CD14-positive monocyte (primary cell): ENCODE measurements at regions of chr3 and their contacts with region 1.

Region 1: DNA sequence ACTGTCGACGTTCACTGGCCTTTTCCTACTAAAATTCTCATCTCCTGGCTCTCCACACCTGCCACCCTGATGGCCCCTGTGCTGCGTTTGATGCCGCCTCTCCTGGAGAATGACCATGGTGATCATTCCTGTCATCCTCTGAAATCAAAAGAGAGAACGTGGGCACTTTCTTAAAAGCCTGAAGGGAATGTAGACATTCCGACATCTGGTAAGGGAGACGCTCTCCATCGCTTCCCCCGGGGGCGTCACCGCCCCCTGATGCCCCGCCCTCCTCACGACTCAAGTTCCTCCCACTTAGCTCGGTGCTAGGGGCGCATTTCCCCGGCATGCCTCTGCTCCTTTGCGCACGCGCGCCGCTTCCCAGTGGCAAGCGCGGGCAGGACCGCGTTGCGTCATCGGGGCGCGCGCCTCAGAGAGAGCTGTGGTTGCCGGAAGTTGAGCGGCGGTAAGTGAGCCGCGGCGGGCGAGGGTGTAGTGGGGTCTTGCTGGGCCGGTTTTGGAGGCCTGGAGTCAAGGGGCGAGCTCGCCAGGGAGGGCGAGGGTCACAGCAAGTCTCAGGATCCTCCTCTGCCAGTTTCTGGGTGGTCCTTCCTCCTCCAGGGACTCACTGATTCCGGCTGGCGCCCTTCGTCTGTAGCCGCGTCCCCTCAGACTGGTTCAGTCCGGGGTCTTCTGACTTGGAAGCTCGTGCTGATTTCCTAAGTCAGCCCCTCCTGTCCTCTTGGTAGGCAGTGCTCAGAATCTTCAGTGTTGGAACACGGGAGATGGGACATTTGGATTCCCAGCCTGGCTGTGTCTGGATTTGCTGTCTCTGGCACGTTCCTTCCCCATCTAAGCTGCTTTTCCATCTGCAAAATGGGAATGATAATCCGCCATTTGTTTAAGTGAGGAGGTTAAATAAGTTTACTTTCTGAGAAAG is at the start of gene ATG7:
- DNase-seq: peak; percentile 97 to 98 (median 97)
- H3K4me3 ChIP-seq: peak within 1 kb of the TSS; percentile 84 to 94 (median 84)
- H3K4me3 Mint-ChIP-seq: peak within 1 kb of the TSS; percentile 85 to 89
- H3K27ac ChIP-seq: peak within 1 kb of the TSS; percentile 98 to 100
- H3K27ac Mint-ChIP-seq: peak within 1 kb of the TSS; percentile 98 to 100 (median 99)
- H3K4me1 ChIP-seq: peaks cover 50 to 51% of the 10 kb centered on the region in 2 donors
- H3K4me1 Mint-ChIP-seq: peaks cover 47% of the 10 kb centered on the region
- H3K27me3 ChIP-seq: no peaks in the 10 kb centered on the region
- H3K27me3 Mint-ChIP-seq: peaks cover 2 to 12% (median 5%) of the 10 kb centered on the region in 3 donors
- CTCF ChIP-seq: no peak
- polyA plus RNA-seq, gene ATG7: 57.4 to 101 (median 89.7) TPM

Region 2: GRCh38 chr3:11037241-11037873 is 234.9 kb before region 1 on chr3:
- intact Hi-C with region 1: no loop called
- DNase-seq: no peak
- H3K4me3 ChIP-seq: no peak overlapping the region
- H3K4me3 Mint-ChIP-seq: peak overlapping the region in 1 of 2 donors; percentile 61
- H3K27ac ChIP-seq: no peak overlapping the region
- H3K27ac Mint-ChIP-seq: no peak overlapping the region
- H3K4me1 ChIP-seq: no peaks in the 10 kb centered on the region
- H3K4me1 Mint-ChIP-seq: no peaks in the 10 kb centered on the region
- H3K27me3 ChIP-seq: peaks cover 19 to 49% of the 10 kb centered on the region in 2 donors
- H3K27me3 Mint-ChIP-seq: peaks cover 47 to 57% (median 48%) of the 10 kb centered on the region in 3 donors
- CTCF ChIP-seq: no peak

Region 3: DNA sequence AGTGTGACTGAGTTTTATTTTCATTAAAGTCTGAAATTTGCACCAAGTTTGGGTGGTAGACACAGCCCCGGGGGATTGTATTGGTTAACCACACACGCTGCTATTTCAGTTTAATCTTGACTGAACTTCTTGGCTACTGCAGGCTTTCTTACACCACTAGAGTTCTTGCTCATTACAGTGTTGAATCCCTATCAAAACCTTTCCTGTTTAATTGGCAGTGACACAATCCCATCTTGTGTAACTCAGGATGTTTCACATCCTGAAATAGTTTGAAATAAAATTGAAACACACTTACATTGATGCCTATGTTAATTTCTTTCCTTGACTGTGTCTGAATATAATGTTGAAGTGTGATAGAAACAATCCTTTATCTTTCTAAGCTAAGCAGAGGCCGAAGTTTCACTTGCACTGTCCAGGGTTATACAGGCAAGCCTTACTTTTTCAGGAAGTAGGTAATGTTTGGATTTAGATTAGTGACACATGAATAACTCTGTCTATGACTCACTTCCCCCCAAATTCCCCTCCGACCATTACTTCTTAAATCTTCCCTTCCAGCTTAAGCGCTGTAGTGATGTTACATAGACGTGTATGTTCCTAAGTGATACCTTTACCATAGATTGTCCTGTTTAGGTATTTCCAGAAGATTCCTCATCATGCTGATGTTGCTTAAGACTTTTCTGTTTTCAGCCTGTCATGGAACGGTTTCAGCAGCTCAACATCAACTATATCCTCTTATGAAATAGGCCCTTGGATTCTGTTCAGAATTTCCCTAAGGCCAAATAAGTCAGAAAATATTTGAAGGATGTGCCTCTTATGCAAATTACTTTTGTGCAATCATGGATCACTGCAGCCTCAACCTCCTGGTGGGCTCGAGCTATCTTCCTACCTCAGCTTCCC is 16.8 kb after region 1 on chr3:
- intact Hi-C with region 1: loop called (anchors 1 to 2 kb)
- DNase-seq: peak; percentile 90 to 99 (median 96)
- H3K4me3 ChIP-seq: peak overlapping the region in 2 of 3 experiments; percentile 26 to 53
- H3K4me3 Mint-ChIP-seq: peak overlapping the region; percentile 56 to 67
- H3K27ac ChIP-seq: peak overlapping the region; percentile 96 to 98
- H3K27ac Mint-ChIP-seq: peak overlapping the region; percentile 96 to 100 (median 99)
- H3K4me1 ChIP-seq: peaks cover 70 to 74% of the 10 kb centered on the region in 2 donors
- H3K4me1 Mint-ChIP-seq: peaks cover 66% of the 10 kb centered on the region
- H3K27me3 ChIP-seq: no peaks in the 10 kb centered on the region
- H3K27me3 Mint-ChIP-seq: peaks cover 0 to 1% (median 0%) of the 10 kb centered on the region in 3 donors
- CTCF ChIP-seq: no peak